Cardiac septum (tissue), 1 donor: ENCODE measurements at regions of chr2 and their contacts with region 1.

Region 1: DNA sequence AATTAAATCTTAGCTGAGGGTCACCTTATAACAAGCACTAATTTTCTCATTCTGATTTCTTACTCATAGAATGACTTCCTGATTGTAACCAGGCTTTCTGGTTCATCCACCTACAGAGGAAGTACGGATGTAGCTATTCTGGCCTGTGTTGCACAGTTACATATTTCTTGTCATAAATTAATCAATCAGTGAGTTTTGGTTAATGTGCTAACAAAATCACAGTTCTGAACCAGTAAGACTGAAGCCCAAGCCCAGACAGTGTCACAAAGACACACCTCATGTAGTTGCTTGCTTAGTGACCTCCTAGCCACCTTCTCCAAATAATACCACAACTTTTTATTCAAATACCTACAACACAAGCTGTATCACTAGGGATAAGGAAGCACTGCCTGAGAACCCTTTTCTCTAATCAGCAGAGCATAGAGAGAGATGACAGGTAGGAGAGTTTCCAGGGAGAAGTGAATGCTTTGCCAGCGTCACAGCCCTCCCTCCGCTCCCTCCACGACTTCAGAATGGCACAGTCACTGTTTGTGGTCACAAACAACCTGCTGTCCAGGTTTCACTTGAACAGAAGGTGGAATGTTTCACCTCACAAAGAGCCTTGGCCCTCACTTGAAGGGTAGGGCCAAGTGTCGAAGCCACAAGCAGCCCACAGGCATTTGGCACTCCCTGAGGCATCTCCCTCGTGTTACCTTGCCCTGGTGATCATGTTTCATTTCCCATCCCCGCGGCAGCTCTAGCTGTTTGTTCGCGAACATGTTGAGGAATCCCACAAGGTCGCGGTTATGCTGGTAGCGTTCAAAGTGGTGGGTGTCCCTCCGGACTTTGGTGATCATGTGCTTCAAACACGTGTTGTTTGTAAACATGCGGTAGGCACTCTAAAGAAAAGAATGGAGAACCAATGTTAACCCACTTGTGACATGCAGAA is 120.8 kb upstream of the STK17B start:
- DNase-seq: no peak

Region 2: GRCh38 chr2:196337208-196337953 is 45.2 kb after region 1 on chr2:
- intact Hi-C with region 1: loop called (anchors 5 kb)
- DNase-seq: no peak

Region 3: DNA sequence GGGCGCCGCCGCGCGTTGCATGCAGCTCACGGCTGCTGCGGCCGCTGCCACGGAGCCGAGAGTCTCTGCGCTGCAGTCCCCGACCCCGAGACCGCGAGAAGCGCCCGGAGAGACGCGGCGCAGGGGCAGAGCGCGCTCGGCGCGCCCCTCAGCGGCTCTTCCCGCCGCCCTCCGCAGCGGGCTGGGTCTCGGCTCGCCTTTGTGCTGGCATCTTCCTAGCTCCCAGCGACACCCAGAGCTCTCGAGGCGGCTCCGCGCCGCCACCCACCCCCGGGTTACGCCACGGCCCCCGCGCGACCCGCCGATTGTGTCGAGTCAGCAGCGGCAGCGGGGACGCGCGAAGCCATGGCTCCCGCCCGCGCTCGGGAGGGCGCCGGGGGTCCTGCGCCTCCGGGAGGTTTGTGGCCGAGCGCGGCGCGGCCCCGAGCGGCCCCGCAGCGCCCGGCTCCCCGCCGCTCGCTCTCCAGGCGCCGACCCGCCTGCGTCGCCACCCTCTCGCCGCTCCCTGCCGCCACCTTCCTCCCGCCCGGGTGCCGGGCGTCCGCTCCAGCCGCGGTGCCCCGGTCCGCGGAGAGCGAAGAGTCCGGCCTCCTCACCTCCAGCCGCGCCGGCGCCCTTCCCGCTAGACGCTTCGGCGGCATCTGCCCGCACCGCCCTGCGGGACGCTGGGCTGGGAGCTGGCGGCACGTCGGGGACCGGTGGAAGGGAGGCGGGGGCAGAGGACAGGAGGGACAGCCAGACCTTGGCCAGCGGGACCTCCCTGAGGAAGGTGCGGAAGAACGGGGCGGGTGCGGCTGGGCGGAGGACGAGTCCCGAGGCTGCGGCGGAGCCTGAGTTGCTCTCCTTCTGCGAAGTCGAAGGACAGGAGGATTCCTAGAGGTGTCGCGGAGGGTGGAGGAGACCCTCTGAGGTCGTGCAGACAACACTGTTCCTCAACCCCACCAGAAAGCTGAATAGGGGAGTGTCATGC is 301.1 kb after region 1 on chr2:
- intact Hi-C with region 1: loop called (anchors 2 kb)
- DNase-seq: peak; percentile 77

Region 4: DNA sequence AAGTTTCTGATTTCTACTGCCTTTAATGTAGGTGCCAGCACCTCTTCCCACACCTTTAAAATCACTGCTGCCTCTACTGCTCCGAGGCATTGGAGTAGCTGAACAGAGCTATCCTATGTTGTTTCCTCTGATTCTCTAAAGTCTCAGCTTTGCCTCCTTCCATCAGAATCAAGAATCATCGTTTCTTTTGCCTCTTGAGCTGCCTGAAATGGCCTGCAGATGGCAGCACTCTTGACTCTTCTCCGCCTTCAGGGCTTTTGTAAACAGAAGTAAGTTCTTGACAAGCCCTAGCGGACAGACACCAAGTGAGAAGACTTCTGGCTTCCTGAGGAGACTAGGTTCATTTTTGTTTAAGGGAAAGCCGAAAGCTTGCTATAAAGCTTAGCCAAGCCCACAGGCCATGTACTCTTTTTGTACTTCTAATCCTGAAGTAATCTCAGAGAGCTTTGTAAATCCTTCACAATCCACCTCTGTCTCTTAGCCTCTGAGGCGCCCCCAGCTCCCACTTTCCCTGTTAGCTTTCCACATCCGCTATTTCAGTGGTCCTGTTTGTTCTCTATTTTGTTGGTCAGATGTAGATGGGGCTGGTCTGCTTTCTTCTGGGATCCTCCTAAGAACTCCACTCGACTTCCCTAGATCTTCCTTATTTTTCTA is 459.0 kb after region 1 on chr2:
- intact Hi-C with region 1: loop called (anchors 10 kb)
- DNase-seq: peak; percentile 78